Activated T-helper 1 cell treated with anti-CD3 and anti-CD28 coated beads, Interleukin-12 subunit alpha, Interleukin-12 subunit beta, Interleukin-2, Interleukin-4 antibody, amounts not matched to agents 30 ng/mL and 10 ng/mL and 1 ng/mL, durations not matched to agents 14 hours and 24 hours and 36 hours (primary cell): ENCODE measurements at regions of chr3 and their contacts with region 1.

Region 1: DNA sequence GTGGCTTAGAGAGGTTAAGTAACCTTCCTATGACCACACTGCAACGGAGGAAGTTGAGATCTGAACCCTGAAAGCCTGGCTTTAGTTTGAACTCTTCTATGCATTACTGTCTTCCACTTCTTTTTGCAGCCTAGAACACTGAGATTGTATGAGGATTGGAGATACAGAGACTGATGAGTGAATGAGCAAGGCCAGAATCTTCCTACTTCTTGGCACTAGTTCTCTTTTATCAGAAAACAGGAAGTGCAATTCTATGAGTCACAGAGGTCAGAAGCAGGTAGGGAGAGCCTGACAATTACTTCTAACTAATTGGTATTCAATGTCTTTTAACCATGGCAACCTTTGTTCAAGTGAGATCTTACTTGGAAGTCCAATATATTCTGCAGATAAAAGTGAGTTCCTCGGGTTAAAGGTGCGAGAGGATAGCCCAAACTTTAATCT is 219.0 kb downstream of the SHQ1 start:
- DNase-seq: no peak
- H3K4me3 Mint-ChIP-seq: peak overlapping the region; percentile 1
- H3K27ac Mint-ChIP-seq: peak overlapping the region; percentile 89
- H3K4me1 Mint-ChIP-seq: peaks cover 64% of the 10 kb centered on the region
- H3K27me3 Mint-ChIP-seq: peaks cover 3% of the 10 kb centered on the region

Region 2: GRCh38 chr3:71978150-71978721 is 651.0 kb before region 1 on chr3:
- intact Hi-C with region 1: loop called (anchors 5 kb)
- DNase-seq: peak; percentile 14
- H3K4me3 Mint-ChIP-seq: peak overlapping the region; percentile 53
- H3K27ac Mint-ChIP-seq: peak overlapping the region; percentile 13
- H3K4me1 Mint-ChIP-seq: peaks cover 47% of the 10 kb centered on the region
- H3K27me3 Mint-ChIP-seq: no peaks in the 10 kb centered on the region

Region 3: GRCh38 chr3:72009851-72010443 is 619.3 kb before region 1 on chr3:
- intact Hi-C with region 1: no loop called
- DNase-seq: no peak
- H3K4me3 Mint-ChIP-seq: no peak overlapping the region
- H3K27ac Mint-ChIP-seq: no peak overlapping the region
- H3K4me1 Mint-ChIP-seq: peaks cover 11% of the 10 kb centered on the region
- H3K27me3 Mint-ChIP-seq: no peaks in the 10 kb centered on the region

Region 4: DNA sequence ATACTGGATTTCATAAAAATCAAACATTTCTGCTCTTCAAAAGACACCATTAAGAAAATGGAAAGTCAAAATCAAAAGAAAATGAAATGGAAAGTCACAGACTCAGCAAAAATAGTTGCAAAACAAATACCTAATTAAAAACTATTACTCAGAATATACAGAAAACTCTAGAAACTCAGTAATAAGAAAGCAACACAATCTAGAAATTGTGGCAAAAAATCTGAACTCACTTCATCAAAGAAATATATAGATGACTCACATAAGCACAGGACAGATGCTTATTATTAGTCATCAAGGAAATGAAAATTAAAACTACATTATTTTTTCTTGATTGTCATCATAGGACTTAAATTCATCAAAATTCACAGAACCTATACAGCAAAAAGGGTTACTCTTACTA is 211.0 kb before region 1 on chr3:
- intact Hi-C with region 1: loop called (anchors 2 kb)
- DNase-seq: no peak
- H3K4me3 Mint-ChIP-seq: no peak overlapping the region
- H3K27ac Mint-ChIP-seq: no peak overlapping the region
- H3K4me1 Mint-ChIP-seq: peaks cover 65% of the 10 kb centered on the region
- H3K27me3 Mint-ChIP-seq: no peaks in the 10 kb centered on the region

Region 5: DNA sequence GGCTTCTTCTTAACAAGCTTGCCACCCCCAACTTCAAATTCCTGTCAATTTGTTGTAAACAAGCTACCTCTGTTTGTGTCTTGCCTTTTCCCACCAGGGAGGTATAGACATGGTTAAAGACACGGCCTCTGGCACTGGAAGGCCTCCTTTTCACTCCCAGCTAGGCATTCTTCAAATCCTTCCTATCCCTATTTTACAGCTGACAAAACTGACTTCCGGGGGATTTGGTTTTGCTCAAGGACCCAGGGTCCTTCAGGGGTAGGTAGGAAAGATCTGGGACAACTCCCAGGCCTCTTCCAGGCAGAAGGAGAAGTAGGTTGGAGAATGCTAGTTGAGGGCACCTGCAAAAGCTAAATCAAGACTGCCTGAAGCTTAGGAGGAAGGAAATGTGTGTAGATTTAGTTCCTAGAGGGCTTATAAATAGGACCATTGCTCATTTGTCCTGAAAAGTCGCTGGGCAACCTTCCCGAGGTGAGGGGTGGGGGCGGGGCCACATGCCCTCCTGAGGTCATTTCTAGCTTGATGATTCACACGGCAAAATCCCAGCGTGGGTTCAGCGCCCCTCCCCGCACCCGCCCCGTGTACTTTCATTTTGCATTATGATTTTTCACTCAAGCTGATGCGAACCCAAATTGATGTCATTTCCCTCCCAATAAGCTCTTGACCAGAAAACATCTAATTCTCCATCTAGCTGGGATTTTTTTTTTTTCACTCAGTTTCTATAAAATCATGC is 146.5 kb before region 1 on chr3:
- intact Hi-C with region 1: loop called (anchors 1 kb)
- DNase-seq: peak; percentile 47
- H3K4me3 Mint-ChIP-seq: peak overlapping the region; percentile 68
- H3K27ac Mint-ChIP-seq: peak overlapping the region; percentile 94
- H3K4me1 Mint-ChIP-seq: peaks cover 73% of the 10 kb centered on the region
- H3K27me3 Mint-ChIP-seq: no peaks in the 10 kb centered on the region

Region 6: DNA sequence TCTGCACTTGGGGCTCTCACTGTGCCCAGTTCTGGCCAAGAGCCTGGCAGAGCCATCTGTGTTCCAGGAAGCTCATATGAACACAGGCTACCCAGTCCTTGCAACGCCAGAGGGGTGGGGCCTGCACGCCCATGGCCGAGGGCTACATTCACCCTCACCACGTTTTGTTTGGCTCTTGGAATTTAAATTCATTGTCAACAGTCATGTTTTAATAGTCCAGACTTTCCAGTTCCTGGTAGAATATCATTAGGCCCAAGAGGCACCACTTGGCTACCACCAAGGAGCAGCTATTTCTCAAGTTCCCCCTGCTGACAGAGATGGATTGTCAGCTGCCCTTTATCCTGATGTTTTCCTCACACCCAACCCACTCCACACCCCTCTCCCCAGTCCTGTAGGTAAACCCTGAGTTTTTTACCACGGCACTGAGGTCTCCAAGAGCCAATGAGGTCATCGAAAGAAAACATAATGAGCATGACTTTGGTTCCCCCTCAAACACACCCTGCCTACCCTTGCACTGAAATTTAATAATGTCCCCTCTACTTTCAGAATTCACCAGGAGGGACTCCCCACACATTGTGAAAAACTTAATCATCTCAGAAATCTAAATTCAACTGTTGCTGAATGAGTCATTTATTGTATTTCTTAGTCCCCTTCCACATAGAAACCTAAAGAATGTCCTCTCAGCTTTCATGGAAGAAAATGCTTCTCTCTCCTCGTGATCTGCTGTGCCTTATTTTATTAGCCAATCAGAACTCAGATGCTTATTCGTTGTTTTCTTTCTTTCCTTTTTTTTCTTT is 93.9 kb after region 1 on chr3:
- intact Hi-C with region 1: loop called (anchors 1 kb)
- DNase-seq: no peak
- H3K4me3 Mint-ChIP-seq: no peak overlapping the region
- H3K27ac Mint-ChIP-seq: no peak overlapping the region
- H3K4me1 Mint-ChIP-seq: peaks cover 19% of the 10 kb centered on the region
- H3K27me3 Mint-ChIP-seq: no peaks in the 10 kb centered on the region

Region 7: GRCh38 chr3:72847751-72848702 is 218.8 kb after region 1 on chr3 and contains the start of gene SHQ1:
- intact Hi-C with region 1: loop called (anchors 1 kb)
- DNase-seq: peak; percentile 92
- H3K4me3 Mint-ChIP-seq: peak within 1 kb of the TSS; percentile 99
- H3K27ac Mint-ChIP-seq: peak within 1 kb of the TSS; percentile 88
- H3K4me1 Mint-ChIP-seq: peaks cover 62% of the 10 kb centered on the region
- H3K27me3 Mint-ChIP-seq: peaks cover 9% of the 10 kb centered on the region
- total RNA-seq, gene SHQ1: 46.1 and 48.5 TPM in 2 replicates